MCF 10A (cell line): ENCODE measurements at regions of chr19 and their contacts with region 1.

Region 1: GRCh38 chr19:43668406-43669158 is 1.4 kb downstream of the PLAUR start:
- DNase-seq: peak; percentile 100
- H3K4me3 Mint-ChIP-seq: peak overlapping the region; percentile 78
- H3K27ac Mint-ChIP-seq: peak overlapping the region; percentile 79
- H3K4me1 Mint-ChIP-seq: peaks cover 24% of the 10 kb centered on the region
- H3K27me3 Mint-ChIP-seq: no peaks in the 10 kb centered on the region
- CTCF ChIP-seq: no peak

Region 2: GRCh38 chr19:43595999-43596841 is 72.4 kb before region 1 on chr19 and contains the starts of genes IRGQ and ZNF576:
- CTCF ChIA-PET with region 1: interaction called, 3 read pairs
- POLR2A ChIA-PET with region 1: interaction called, 27 read pairs
- intact Hi-C with region 1: no loop called
- DNase-seq: peak; percentile 100
- H3K4me3 Mint-ChIP-seq: peak within 1 kb of the TSS; percentile 99
- H3K27ac Mint-ChIP-seq: peak within 1 kb of the TSS; percentile 99
- H3K4me1 Mint-ChIP-seq: peaks cover 24% of the 10 kb centered on the region
- H3K27me3 Mint-ChIP-seq: no peaks in the 10 kb centered on the region
- CTCF ChIP-seq: no peak
- total RNA-seq, gene IRGQ: 21.0 and 26.5 TPM in 2 replicates
- total RNA-seq, gene ZNF576: 13.2 and 18.4 TPM in 2 replicates

Region 3: DNA sequence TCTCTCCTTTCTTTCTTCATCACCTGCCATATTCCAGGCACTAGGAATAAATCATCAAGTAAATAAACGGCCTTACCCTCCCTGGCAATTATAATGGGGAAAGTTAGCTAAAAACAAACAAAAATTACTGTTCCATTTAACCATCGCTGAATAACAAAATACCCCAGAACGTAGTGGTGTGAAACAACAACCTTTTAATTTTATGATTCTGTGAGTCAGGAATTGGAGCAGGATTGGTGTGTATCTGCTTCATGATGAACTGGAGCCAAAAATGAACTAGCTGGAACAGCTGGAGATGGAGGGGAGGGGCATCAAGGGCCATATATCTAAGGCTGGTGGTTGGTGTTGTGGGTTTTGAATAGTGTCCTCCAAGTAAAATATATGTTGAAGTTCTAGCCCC is 25.3 kb before region 1 on chr19:
- CTCF ChIA-PET with region 1: no interaction called
- POLR2A ChIA-PET with region 1: no interaction called
- intact Hi-C with region 1: no loop called
- DNase-seq: no peak
- H3K4me3 Mint-ChIP-seq: no peak overlapping the region
- H3K27ac Mint-ChIP-seq: no peak overlapping the region
- H3K4me1 Mint-ChIP-seq: peaks cover 16% of the 10 kb centered on the region
- H3K27me3 Mint-ChIP-seq: peaks cover 26% of the 10 kb centered on the region
- CTCF ChIP-seq: no peak

Region 4: DNA sequence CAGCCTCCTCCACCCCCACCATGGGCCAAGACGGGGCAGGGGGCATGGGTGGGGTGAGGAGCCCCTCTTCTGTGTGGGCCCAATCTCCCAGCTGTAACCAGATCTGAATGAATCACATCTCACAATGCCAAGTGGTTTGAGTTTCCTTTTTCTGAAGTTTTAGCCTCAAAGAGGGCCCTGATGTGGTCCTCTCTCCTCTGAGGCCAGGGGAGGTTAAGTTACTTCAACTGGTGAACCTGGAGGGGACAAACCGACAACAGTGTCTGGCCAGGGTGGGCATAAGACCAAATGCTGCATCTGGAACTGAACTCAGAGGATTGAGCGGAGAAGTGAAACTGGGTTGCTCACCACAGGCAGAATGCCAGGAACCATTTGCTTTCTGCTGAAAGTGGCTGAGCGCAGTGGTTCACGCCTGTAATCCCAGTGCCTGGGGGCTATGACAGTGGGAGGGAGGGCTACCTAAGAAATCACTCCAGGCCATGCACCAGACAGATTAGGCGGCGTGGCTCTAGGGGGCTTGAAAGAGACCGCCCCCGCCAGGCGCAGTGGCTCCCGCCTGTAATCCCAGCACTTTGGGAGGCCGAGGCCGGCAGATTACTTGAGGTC is 31.9 kb after region 1 on chr19:
- CTCF ChIA-PET with region 1: interaction called, 5 read pairs
- POLR2A ChIA-PET with region 1: interaction called, 11 read pairs
- intact Hi-C with region 1: loop called (anchors 2 kb)
- DNase-seq: peak; percentile 85
- H3K4me3 Mint-ChIP-seq: peak overlapping the region; percentile 59
- H3K27ac Mint-ChIP-seq: peak overlapping the region; percentile 86
- H3K4me1 Mint-ChIP-seq: peaks cover 23% of the 10 kb centered on the region
- H3K27me3 Mint-ChIP-seq: no peaks in the 10 kb centered on the region
- CTCF ChIP-seq: no peak

Region 5: DNA sequence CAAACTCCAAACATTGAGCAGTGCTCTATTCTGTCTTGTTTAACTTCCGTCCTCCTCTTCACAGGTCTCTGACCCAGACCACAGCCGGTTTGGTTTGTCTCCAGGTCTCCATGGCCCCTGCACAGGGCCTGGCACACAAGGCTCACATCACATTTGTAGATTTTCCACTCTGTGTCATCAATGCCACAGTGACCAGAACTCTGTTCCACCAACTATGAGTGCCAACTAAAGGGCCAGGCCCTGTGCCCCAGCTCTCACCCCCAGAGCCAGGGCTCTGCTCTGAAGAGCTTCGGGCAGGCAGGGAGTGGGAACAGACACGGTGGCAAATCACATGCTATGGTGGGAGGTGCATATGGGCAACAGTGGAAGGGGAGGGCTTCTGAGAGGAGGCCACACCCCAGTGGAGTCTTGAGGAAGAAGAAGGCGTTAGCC is 70.2 kb after region 1 on chr19:
- CTCF ChIA-PET with region 1: interaction called, 7 read pairs
- POLR2A ChIA-PET with region 1: interaction called, 21 read pairs
- intact Hi-C with region 1: no loop called
- DNase-seq: no peak
- H3K4me3 Mint-ChIP-seq: peak overlapping the region; percentile 43
- H3K27ac Mint-ChIP-seq: peak overlapping the region; percentile 94
- H3K4me1 Mint-ChIP-seq: peaks cover 27% of the 10 kb centered on the region
- H3K27me3 Mint-ChIP-seq: no peaks in the 10 kb centered on the region
- CTCF ChIP-seq: no peak

Region 6: DNA sequence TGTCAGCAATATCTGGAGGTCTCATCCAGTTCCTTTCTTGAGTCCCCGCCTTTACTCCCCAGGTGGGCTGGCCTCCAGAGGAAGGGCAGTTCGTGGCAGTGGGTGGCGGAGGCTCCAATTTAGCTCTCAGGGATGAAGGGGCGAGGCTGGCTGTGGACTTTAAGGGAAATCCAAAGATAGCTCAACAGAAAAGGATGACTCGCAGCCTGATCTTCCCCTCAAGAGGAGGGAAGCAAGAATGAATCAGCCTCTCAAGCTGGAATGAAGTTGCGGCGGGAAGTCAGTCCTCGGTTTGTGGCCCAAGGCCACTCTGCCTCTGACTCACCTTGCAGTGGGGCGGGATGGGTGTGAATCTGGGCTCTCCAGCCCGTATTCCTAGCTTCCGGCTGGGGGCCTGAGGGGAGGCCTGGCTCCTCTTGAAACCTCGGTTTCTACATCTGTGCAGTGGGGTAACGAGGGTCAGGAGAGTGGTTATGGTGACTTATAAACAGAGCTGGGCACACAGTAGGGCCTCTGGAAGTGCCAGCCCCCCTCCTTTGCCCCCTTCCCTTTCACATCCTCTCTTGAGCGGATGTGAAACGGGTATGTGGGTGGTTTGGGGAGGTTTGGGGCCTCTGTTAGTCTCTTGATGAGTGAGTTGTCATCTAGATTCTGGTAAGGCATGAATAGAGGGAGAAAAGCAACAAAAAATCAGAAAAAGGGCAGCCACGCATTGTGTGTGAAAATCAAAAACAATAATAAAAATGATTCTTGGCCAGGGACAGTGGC is 96.7 kb after region 1 on chr19:
- CTCF ChIA-PET with region 1: interaction called, 5 read pairs
- POLR2A ChIA-PET with region 1: interaction called, 19 read pairs
- intact Hi-C with region 1: no loop called
- DNase-seq: peak; percentile 99
- H3K4me3 Mint-ChIP-seq: peak overlapping the region; percentile 15
- H3K27ac Mint-ChIP-seq: peak overlapping the region; percentile 75
- H3K4me1 Mint-ChIP-seq: peaks cover 47% of the 10 kb centered on the region
- H3K27me3 Mint-ChIP-seq: no peaks in the 10 kb centered on the region
- CTCF ChIP-seq: no peak